ENCODE measurements at regions of chr3 and their contacts with region 1.

Region 1: GRCh38 chr3:53072653-53073552 is 27.0 kb upstream of the SFMBT1 start:
- DNase-seq: peak; percentile 97
- ATAC-seq: peak; percentile 88
- H3K4me3 Mint-ChIP-seq: peak overlapping the region; percentile 78
- H3K27ac Mint-ChIP-seq: peak overlapping the region; percentile 98
- H3K4me1 Mint-ChIP-seq: peaks cover 17% of the 10 kb centered on the region
- H3K27me3 Mint-ChIP-seq: no peaks in the 10 kb centered on the region
- CTCF ChIP-seq: peak; percentile 89

Region 2: DNA sequence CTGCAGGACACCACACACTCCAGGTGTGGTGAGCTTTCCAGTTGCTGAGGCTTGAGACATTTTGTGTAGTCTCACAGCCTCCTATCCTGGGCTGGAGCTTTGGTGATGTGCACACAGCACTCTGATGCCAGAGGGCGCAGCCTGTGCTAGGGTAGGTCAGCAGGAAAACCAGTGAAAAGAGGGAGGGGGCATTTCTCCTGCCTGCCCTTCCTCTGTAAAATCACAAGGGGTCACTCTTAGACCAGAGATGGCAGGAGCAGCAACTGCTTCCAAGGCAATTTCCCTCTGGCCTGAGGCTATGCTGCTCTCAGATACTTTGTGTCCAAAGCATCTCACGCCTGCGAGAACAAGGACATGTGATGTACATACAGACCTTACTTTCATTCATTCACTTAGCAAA is 221.6 kb before region 1 on chr3:
- CTCF ChIA-PET with region 1: interaction called, 3 read pairs
- POLR2A ChIA-PET with region 1: no interaction called
- intact Hi-C with region 1: loop called (anchors 2 kb)
- DNase-seq: peak; percentile 37
- ATAC-seq: peak; percentile 90
- H3K4me3 Mint-ChIP-seq: no peak overlapping the region
- H3K27ac Mint-ChIP-seq: no peak overlapping the region
- H3K4me1 Mint-ChIP-seq: no peaks in the 10 kb centered on the region
- H3K27me3 Mint-ChIP-seq: no peaks in the 10 kb centered on the region
- CTCF ChIP-seq: peak; percentile 64

Region 3: GRCh38 chr3:52934630-52935530 is 138.0 kb before region 1 on chr3:
- CTCF ChIA-PET with region 1: interaction called, 4 read pairs
- POLR2A ChIA-PET with region 1: interaction called, 3 read pairs
- intact Hi-C with region 1: loop called (anchors 10 kb)
- DNase-seq: peak; percentile 71
- ATAC-seq: peak; percentile 99
- H3K4me3 Mint-ChIP-seq: no peak overlapping the region
- H3K27ac Mint-ChIP-seq: peak overlapping the region; percentile 36
- H3K4me1 Mint-ChIP-seq: peaks cover 6% of the 10 kb centered on the region
- H3K27me3 Mint-ChIP-seq: no peaks in the 10 kb centered on the region
- CTCF ChIP-seq: peak; percentile 79

Region 4: DNA sequence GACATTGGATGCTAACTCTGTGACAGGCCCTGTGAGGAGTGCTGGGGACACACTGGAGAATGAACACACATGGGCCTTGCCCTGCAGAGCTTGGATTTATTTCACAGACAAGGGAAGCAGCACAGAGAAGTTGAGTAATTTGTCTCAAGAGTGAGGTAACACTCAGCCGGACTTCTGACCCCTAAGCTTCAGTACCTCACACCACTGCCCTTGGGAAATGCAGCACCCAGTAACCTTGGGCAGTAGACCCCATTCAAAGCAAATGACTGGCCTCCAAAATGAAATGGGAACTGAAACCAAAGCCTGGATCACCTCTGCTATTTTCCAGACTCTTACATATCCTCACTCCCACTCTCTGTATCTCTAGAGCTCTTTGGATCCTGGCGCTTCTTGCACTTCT is 20.0 kb after region 1 on chr3:
- CTCF ChIA-PET with region 1: no interaction called
- POLR2A ChIA-PET with region 1: no interaction called
- intact Hi-C with region 1: no loop called
- DNase-seq: no peak
- ATAC-seq: no peak
- H3K4me3 Mint-ChIP-seq: no peak overlapping the region
- H3K27ac Mint-ChIP-seq: no peak overlapping the region
- H3K4me1 Mint-ChIP-seq: peaks cover 6% of the 10 kb centered on the region
- H3K27me3 Mint-ChIP-seq: no peaks in the 10 kb centered on the region
- CTCF ChIP-seq: no peak